ENCODE measurements at regions of chr12 and their contacts with region 1.

Region 1: DNA sequence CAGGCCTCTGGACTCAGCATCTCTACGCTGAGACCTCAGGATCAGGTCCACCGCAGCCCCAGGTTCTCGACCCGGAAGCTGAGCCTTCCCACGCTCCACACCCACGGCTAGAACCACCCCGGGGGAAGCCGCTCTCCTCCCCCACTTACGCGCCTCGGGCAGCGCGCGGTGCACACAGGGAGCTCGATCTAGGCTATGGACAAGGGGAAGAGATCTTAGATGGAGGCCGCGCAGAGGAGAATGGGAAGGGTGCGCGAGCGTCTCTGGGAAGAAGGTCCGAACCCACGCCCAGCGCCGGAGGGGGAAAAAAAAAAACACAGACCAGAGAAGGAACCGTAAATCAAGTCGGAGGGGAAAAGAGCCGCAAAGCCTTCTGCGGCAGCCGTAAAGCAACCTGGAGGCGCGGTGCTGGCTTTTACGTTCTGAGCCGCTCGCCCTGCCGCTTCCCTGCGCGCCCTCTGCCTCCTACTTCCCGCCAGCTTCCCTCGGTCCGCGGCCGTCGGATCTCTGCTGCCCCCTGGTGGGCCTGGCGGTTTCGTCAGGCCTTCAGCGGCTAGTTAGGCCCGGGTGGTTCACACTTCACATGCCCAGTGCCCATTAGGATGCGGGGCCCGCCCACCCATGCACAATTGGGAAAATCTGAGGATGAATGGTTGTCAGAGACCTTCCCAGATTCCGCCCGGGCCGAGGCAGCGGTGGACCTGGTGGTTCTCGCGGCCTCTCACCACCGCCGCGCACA is at the start of gene RAD52:
- DNase-seq: peak; percentile 93 to 98 (median 96)
- H3K4me3 ChIP-seq: peak within 1 kb of the TSS; percentile 58 to 99 (median 87)
- H3K27ac ChIP-seq: peak within 1 kb of the TSS; percentile 76 to 97 (median 92)
- H3K27me3 ChIP-seq: no peaks in the 10 kb centered on the region
- CTCF ChIP-seq: peak; percentile 95 to 100 (median 99)
- total RNA-seq, gene RAD52: 14.4 to 71.1 (median 31.1) TPM

Region 2: GRCh38 chr12:569803-570434 is 379.7 kb before region 1 on chr12:
- intact Hi-C with region 1: loop called (anchors 2 kb)
- DNase-seq: peak; percentile 76 to 89 (median 84)
- H3K4me3 ChIP-seq: peak overlapping the region; percentile 48 to 92 (median 68)
- H3K27ac ChIP-seq: peak overlapping the region in 55 of 59 donors; percentile 22 to 87 (median 72)
- H3K27me3 ChIP-seq: no peaks in the 10 kb centered on the region
- CTCF ChIP-seq: peak; percentile 75 to 98 (median 95)

Region 3: DNA sequence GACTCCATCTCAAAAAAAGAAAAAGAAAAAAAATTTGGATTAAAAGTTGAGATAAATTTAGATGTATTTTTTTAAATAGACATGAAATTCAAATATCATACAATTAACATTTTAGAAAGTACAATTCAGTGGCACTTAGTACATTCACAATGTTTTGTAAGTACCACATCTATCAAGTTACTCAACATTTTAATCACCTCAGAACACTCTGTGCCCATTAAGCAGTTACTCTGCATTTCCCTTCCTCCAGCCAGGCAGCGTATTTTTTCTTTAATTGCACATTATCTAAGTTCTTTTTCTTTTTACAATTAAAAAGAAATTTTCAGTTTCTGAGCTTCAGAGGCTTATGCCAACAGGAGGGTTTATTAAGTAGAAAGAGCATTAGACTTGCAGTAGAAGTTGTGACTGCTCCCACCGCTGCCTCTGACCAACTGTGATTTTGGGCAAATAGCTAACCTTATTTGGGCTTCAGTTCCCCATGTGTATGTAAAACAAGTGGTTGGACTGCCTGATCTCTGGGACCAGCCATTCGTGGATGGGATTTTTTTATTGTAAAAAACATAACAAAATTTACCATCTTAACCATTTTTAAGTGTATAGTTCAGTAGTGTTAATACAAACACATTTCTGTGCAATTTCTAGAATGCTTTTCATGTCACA is 131.6 kb before region 1 on chr12:
- intact Hi-C with region 1: loop called (anchors 2 to 5 kb)
- DNase-seq: no peak
- H3K4me3 ChIP-seq: no peak overlapping the region
- H3K27ac ChIP-seq: peak overlapping the region in 22 of 59 donors; percentile 1 to 63 (median 21)
- H3K27me3 ChIP-seq: no peaks in the 10 kb centered on the region
- CTCF ChIP-seq: no peak

Region 4: GRCh38 chr12:1093166-1093751 is 143.6 kb after region 1 on chr12:
- intact Hi-C with region 1: loop called (anchors 5 kb)
- DNase-seq: no peak
- H3K4me3 ChIP-seq: no peak overlapping the region
- H3K27ac ChIP-seq: peak overlapping the region in 3 of 59 donors; percentile 9 to 56 (median 13)
- H3K27me3 ChIP-seq: no peaks in the 10 kb centered on the region
- CTCF ChIP-seq: peak; percentile 29 to 85 (median 68)

Measured in dorsolateral prefrontal cortex (tissue), 120 donors.